Posterior vena cava (tissue), 2 donors: ENCODE measurements at regions of chr13 and their contacts with region 1.

Region 1: GRCh38 chr13:105920375-105920774 is 615.1 kb downstream of the EFNB2 start:
- DNase-seq: no peak

Region 2: DNA sequence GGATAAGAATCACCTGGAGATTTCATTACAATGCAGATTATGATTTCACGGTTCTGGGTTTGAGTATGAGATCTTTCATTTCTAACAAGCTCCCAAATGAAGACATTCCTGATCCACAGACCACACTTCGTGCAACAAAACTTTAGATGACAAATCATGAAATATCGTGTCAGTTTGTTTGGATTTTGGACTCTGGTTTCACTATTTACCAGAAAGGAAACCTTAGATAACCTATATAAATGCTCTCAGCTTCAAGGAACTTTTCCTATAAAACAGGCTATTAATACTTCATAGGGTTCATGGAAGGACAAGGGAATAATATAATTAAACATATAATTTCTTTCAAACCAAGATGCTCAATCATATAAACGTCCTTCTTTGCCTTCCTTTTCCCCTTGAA is 1923.6 kb before region 1 on chr13:
- intact Hi-C with region 1: loop called in 1 of 2 experiments (anchors 10 kb)
- DNase-seq: no peak

Region 3: DNA sequence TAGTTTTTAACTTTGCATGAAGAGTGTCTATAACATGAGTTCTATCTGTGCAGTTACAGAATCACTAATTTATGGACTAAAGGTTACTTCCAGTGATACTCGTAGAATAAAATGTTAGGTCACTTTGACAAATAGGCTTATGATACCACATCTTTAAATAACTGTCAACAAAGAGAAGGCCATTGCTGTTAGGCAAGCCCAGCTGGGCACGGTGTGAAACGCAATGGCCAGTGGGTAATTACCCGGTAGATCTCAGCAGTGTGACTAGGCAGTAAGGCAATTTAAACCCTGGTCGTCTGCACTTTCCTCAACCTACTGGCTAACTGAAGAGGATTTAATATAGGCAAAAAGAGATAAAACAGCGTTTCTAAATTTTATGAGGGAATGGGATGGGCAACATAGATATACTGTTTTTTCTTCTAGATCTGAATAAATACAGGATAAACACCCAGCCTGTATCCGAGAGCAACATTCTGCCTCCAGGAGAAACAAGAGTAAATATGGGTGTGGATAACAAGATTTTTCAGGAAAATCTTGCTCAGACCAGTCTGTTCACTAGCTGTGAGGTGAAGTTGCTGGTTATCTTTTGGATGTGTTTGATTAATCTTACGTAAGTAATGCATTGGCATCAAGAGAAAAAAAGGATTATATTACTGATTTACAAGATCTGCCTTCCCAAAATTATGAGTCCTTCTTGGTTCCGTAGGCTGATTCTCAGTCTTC is 16.2 kb before region 1 on chr13:
- intact Hi-C with region 1: no loop called
- DNase-seq: no peak